ENCODE measurements at regions of chr16 and their contacts with region 1.

Region 1: GRCh38 chr16:67521095-67521804 is 7.4 kb upstream of the RIPOR1 start:
- DNase-seq: peak; percentile 97
- ATAC-seq: peak; percentile 94

Region 2: DNA sequence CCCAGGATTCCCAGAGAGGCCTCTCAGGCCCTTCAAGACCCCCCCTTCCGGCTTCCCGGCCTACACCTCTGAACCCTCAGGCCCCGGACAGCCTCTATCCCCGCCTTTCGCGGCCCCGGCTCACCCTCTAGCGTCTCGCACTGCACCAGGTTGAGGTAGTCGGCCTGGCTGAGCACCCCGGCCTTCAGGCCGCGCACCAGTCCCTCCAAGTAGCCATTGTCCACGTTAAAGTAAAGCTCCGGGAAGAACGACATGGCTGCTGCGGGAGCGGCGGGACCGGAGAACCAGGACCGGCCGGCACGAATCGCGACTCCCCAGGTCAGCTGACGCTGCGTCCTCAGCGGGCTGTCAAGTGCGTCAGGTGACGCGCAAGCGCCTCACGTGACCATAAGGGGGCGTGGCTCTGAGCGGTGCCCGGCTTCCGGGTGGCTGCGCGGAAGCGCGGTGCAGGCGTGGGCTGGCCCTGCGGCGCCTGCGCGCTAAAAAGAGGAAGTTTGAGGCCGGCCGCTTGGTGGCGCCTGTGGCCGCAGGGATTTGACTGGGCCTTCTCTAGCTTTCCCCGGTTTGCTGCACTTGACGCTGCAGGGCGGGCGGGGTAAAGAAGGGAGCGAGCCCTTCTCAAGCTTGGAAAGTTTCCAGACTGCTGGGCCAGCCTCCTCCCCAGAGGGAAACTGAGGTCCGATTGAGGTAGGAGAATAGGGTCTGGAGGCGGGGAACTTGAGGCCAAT is 40.3 kb before region 1 on chr16 and contains the start of gene ATP6V0D1:
- intact Hi-C with region 1: loop called (anchors 5 kb)
- DNase-seq: peak; percentile 99
- ATAC-seq: peak; percentile 97
- total RNA-seq, gene ATP6V0D1: 67.7 TPM

Region 3: GRCh38 chr16:67561824-67562525 is 40.7 kb after region 1 on chr16:
- intact Hi-C with region 1: loop called (anchors 2 kb)
- DNase-seq: peak; percentile 99
- ATAC-seq: peak; percentile 95

Region 4: DNA sequence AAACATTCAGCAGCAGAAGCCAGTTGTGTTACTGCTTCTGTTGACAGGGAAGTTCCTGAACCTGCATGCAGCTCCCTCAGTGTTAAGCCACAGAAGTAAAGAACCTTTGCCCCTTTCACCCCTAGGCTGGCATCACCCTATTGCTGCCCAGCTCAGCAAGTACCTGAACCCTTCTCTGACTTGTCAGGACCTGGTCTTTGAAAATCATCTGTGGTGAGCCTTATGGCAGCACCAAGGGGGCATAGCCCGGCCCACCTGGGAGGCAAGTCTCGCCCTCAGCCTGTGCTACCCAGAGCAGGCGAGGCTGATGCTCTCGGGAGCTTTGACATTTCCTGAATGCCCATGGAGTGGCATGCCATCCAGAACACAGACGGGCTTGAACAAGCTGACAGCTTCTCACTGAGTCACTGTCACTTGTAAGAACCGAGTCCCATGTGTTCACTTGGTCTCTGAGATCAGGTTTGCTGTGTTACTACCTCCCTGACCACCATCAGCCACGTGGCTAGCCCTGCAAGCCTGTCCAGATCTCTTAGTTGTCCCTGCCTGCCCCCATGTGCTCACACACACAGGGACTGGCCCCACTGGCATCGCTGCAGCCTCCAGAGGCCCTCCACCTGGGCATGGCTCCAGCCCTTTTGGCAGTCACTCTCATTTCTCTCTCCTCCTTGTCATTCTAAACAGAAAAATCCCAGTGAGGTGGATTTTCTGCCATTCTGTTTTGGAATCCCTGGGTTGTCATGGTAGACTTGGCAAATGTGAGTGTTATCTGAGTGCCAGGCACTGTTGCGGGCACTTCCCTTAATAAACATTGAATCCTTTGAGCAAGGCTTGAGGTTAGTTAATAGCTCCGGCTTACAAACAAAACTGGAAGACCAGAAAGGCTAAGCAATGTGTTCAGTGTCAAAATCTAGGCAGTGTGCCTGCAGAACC is 120.8 kb after region 1 on chr16:
- intact Hi-C with region 1: loop called (anchors 1 kb)
- DNase-seq: peak; percentile 82
- ATAC-seq: peak; percentile 91

Region 5: DNA sequence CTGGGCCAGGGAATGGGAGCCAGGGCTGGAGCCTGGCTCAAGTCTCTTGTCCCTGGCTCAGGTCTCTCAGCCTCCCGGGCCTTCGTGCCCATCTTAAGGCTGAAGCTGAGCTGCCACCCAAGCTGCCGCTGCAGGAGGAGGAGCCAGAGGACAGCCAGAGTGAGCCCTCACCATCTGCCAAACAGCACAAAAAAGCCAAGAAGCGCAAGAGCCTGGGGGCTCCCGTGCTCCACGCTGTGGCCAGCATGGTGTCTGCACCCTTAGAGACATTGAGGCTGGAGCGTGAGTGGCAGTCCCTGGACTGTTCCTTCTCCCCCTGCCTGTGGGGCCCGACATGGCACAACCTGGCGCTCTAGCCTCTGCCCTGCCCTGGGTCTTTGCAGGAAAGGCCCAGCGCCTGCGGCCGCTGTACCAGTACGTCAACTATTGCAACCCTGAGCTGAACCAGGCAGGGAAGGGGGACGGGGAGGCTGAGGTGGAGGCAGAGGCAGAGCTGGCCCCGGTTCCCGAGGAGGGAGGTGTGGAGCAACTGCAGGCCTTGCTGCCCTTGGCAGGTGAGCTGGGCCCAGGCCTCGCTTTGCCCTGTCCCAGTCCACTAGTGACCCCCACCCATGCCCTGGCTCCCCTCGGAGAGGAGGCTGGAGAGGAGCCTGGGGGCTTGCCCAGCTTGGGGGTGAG is 146.7 kb after region 1 on chr16:
- intact Hi-C with region 1: loop called (anchors 2 kb)
- DNase-seq: peak; percentile 90
- ATAC-seq: peak; percentile 91

Region 6: GRCh38 chr16:67806428-67807147 is 285.3 kb after region 1 on chr16 and contains the starts of genes RANBP10 and TSNAXIP1:
- intact Hi-C with region 1: loop called (anchors 5 kb)
- DNase-seq: peak; percentile 97
- ATAC-seq: peak; percentile 98
- total RNA-seq, gene RANBP10: 11.1 TPM
- total RNA-seq, gene TSNAXIP1: 0.41 TPM

Region 7: DNA sequence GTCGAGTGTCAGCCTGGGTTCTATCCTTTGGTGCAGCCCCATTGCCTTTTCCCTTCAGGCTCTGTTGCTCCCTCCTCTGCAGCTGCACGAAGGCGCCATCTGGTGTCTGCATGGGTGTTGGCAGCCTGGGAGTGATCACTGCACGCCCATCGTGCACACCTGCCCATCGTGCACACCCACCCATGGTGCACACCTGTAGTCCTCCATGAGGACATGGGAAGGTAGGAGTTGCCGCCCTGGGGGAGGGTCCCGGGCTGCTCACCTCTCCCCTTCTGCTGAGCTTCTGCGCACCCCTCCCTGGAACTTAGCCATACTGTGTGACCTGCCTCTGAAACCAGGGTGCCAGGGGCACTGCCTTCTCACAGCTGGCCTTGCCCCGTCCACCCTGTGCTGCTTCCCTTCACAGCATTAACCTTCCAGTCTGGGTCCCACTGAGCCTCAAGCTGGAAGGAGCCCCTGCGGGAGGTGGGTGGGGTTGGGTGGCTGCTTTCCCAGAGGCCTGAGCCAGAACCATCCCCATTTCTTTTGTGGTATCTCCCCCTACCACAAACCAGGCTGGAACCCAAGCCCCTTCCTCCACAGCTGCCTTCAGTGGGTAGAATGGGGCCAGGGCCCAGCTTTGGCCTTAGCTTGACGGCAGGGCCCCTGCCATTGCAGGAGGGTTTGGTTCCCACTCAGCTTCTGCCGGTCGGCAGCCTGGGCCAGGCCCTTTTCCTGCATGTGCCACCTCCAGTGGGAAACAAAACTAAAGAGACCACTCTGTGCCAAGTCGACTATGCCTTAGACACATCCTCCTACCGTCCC is 407.5 kb after region 1 on chr16:
- intact Hi-C with region 1: loop called (anchors 1 kb)
- DNase-seq: peak; percentile 80
- ATAC-seq: peak; percentile 75